Posterior vena cava (tissue), 2 donors: ENCODE measurements at regions of chr20 and their contacts with region 1.

Region 1: DNA sequence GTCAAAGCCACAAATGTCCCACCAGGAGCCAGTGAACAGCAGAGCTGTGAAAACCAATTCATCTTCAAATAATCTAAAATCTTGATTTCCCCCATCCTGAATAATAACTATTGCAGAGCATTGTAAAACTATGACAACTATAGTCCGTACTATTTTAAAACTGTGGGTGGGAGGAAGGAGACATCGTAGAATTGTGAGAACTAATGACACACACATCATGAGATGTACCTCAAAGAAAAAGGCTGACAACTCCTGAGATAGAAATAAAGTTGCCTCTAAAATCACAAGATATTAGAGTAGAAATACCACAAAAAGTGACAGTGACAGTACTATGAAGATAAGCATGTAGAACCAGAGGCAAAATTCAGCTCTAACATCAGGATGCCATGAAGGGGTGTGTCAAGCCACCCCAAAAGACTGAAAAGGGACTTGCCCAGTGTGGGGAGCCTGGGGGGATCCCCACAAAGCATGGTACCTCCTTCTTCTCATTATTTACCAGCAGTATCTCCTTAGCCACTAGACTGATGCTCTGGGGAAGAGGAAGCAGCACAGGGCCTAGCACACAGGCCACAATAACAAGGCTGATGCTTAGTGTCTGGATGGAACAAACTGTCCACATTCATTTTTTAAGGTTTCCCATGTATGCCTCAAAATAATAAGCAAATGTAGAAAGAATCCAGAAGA is 13.4 kb downstream of the NAPB start:
- DNase-seq: no peak

Region 2: GRCh38 chr20:23366384-23366783 is 41.5 kb before region 1 on chr20:
- intact Hi-C with region 1: loop called in 1 of 2 experiments (anchors 5 kb)
- DNase-seq: no peak